ENCODE measurements at regions of chr2 and their contacts with region 1.

Region 1: GRCh38 chr2:160994141-160995002 is 165.9 kb upstream of the TANK start:
- DNase-seq: peak; percentile 71
- H3K4me3 Mint-ChIP-seq: no peak overlapping the region
- H3K27ac Mint-ChIP-seq: no peak overlapping the region
- H3K4me1 Mint-ChIP-seq: peaks cover 6% of the 10 kb centered on the region
- H3K27me3 Mint-ChIP-seq: no peaks in the 10 kb centered on the region

Region 2: GRCh38 chr2:160087854-160088745 is 906.3 kb before region 1 on chr2:
- CTCF ChIA-PET with region 1: interaction called, 4 read pairs
- POLR2A ChIA-PET with region 1: no interaction called
- intact Hi-C with region 1: loop called (anchors 10 kb)
- DNase-seq: no peak
- H3K4me3 Mint-ChIP-seq: no peak overlapping the region
- H3K27ac Mint-ChIP-seq: no peak overlapping the region
- H3K4me1 Mint-ChIP-seq: no peaks in the 10 kb centered on the region
- H3K27me3 Mint-ChIP-seq: peaks cover 1% of the 10 kb centered on the region

Region 3: GRCh38 chr2:160252278-160252887 is 742.0 kb before region 1 on chr2:
- CTCF ChIA-PET with region 1: interaction called, 18 read pairs
- POLR2A ChIA-PET with region 1: no interaction called
- intact Hi-C with region 1: loop called (anchors 1 kb)
- DNase-seq: no peak
- H3K4me3 Mint-ChIP-seq: no peak overlapping the region
- H3K27ac Mint-ChIP-seq: no peak overlapping the region
- H3K4me1 Mint-ChIP-seq: no peaks in the 10 kb centered on the region
- H3K27me3 Mint-ChIP-seq: peaks cover 1% of the 10 kb centered on the region

Region 4: GRCh38 chr2:160429248-160430000 is 564.9 kb before region 1 on chr2:
- CTCF ChIA-PET with region 1: interaction called, 8 read pairs
- POLR2A ChIA-PET with region 1: no interaction called
- intact Hi-C with region 1: loop called (anchors 5 kb)
- DNase-seq: no peak
- H3K4me3 Mint-ChIP-seq: no peak overlapping the region
- H3K27ac Mint-ChIP-seq: peak overlapping the region; percentile 69
- H3K4me1 Mint-ChIP-seq: peaks cover 58% of the 10 kb centered on the region
- H3K27me3 Mint-ChIP-seq: no peaks in the 10 kb centered on the region

Region 5: GRCh38 chr2:161273038-161273760 is 278.8 kb after region 1 on chr2:
- CTCF ChIA-PET with region 1: interaction called, 8 read pairs
- POLR2A ChIA-PET with region 1: no interaction called
- intact Hi-C with region 1: loop called (anchors 2 kb)
- DNase-seq: no peak
- H3K4me3 Mint-ChIP-seq: no peak overlapping the region
- H3K27ac Mint-ChIP-seq: no peak overlapping the region
- H3K4me1 Mint-ChIP-seq: no peaks in the 10 kb centered on the region
- H3K27me3 Mint-ChIP-seq: no peaks in the 10 kb centered on the region

Measured in activated CD4-positive, alpha-beta memory T cell treated with anti-CD3 and anti-CD28 coated beads for 36 hours (primary cell).